Activated CD8-positive, alpha-beta memory T cell treated with anti-CD3 and anti-CD28 coated beads, Interleukin-2, amount 10 ng/mL, durations not matched to agents 7 days and 5 days (primary cell): ENCODE measurements at regions of chr18 and their contacts with region 1.

Region 1: GRCh38 chr18:23356915-23357601 is 96.0 kb upstream of the RIOK3 start:
- DNase-seq: no peak
- ATAC-seq: no peak
- H3K4me3 Mint-ChIP-seq: no peak overlapping the region
- H3K27ac Mint-ChIP-seq: no peak overlapping the region
- H3K4me1 Mint-ChIP-seq: peaks cover 24% of the 10 kb centered on the region
- H3K27me3 Mint-ChIP-seq: no peaks in the 10 kb centered on the region

Region 2: DNA sequence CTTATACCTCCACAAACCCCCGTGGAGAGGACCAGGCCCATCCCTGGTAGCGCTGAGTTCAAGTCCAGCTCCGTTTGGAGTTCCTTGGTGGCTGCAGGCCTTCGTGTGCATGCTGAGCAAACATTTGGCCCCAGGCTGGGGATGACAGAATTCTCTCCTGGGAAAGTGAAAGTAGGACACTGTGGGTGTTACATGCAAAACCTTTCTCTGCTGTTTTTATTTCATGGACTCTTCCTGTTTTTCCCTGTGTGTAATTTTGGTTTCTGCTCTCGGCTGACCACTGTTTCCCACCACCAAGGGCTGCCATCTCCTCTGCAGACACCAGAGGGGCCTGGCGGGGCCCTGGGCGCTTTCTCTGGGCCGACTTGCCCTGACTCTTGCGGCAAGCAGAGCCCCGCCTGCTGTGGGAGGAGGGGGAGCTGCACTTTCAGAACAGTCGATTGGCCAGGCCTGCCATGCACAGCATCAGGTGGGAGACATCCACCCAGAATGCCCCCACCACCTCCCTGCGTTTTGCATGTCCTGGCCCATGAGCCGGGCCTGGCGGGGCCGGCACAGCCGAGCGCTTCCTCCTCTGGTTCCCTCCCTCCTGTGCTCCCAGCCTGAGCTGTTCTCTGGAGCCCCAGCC is 119.4 kb before region 1 on chr18:
- CTCF ChIA-PET with region 1: interaction called, 11 read pairs
- DNase-seq: peak; percentile 76
- ATAC-seq: peak; percentile 81
- H3K4me3 Mint-ChIP-seq: peak overlapping the region; percentile 49
- H3K27ac Mint-ChIP-seq: peak overlapping the region; percentile 79
- H3K4me1 Mint-ChIP-seq: peaks cover 42% of the 10 kb centered on the region
- H3K27me3 Mint-ChIP-seq: no peaks in the 10 kb centered on the region

Region 3: GRCh38 chr18:23612435-23613085 is 255.5 kb after region 1 on chr18:
- CTCF ChIA-PET with region 1: no interaction called
- DNase-seq: no peak
- ATAC-seq: no peak
- H3K4me3 Mint-ChIP-seq: no peak overlapping the region
- H3K27ac Mint-ChIP-seq: no peak overlapping the region
- H3K4me1 Mint-ChIP-seq: no peaks in the 10 kb centered on the region
- H3K27me3 Mint-ChIP-seq: peaks cover 12% of the 10 kb centered on the region